IMR-90 (cell line): ENCODE measurements at regions of chr1 and their contacts with region 1.

Region 1: DNA sequence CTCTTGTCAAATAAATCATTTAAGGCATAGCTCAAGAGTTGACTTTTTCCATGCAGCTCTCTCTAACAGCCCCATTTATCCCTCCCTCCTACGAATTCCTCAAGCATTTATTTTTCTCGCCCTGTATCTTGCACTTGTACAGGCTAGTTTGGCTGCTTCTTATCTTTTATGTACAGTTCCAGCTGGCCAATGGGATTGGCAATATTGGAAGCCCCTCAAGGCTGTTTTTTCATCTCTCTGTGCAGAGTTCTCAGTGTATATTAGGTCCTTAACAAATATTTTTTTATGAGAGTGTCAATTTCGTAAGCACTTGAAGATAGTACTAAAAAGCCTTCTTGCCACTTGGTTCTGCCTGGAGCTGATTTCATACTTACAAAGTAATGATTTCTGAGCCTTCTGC is 356.0 kb downstream of the ST6GALNAC3 start:
- DNase-seq: no peak
- ATAC-seq: no peak
- H3K4me3 ChIP-seq: no peak overlapping the region
- H3K27ac ChIP-seq: no peak overlapping the region
- H3K4me1 ChIP-seq: peaks cover 2% of the 10 kb centered on the region; the same call in 1 of the 2 replicates
- H3K27me3 ChIP-seq: no peaks in the 10 kb centered on the region
- CTCF ChIP-seq: no peak
- POLR2A ChIP-seq: no peak
- RAD21 ChIP-seq: no peak

Region 2: DNA sequence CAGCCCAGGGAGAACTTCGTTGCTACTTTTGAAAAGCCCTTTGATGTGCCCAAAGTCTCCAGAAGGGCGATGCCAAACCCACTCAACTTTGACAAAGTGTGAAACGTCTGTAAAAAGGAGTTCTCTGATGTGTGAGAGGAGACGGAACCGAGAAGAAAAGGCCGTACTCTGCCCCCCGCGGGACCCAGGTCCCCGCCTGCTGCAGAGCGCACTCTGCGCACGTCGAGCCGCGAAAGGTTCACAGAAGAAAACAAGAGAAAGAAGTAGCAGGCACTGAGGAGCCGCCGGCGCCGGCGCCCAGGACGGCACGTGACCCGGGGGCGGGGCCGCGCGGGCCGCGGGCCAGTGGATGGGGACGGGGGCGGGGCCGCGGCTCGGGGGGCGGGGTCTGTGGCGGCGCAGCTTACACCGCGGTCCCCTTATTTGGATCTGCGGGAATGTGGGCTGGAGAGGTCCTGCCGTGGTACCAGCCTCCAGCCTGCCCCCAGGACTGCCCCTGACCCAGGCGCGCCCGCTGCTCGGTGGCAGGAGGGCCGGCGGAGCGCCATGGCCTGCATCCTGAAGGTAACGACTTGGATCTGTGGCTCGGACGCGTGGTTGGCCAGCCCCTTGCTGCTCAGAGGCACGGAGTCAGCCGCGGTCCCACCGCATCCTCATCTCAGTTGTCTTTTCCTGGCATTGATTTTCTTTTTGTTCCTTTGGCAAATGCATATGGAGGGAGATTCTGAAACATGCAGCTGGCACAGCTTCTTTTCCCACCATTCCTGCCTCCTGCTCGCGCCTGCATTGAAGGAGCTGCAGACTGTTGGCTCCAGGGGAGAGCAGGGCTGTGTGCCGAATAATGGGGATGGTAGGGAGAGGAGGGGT is 356.0 kb before region 1 on chr1 and contains the start of gene ST6GALNAC3:
- CTCF ChIA-PET with region 1: no interaction called
- POLR2A ChIA-PET with region 1: no interaction called
- dilution Hi-C with region 1: no loop called
- in situ Hi-C with region 1: no loop called
- intact Hi-C with region 1: no loop called
- DNase-seq: peak; percentile 47
- ATAC-seq: peak; percentile 96
- H3K4me3 ChIP-seq: peak within 1 kb of the TSS; percentile 79
- H3K27ac ChIP-seq: peak within 1 kb of the TSS; percentile 13; the same call in 1 of the 2 replicates
- H3K4me1 ChIP-seq: no peaks in the 10 kb centered on the region
- H3K27me3 ChIP-seq: no peaks in the 10 kb centered on the region
- CTCF ChIP-seq: no peak
- POLR2A ChIP-seq: no peak
- RAD21 ChIP-seq: no peak
- total RNA-seq, gene ST6GALNAC3: 0.56 and 1.3 TPM in 2 replicates

Region 3: GRCh38 chr1:76418531-76418930 is 12.0 kb before region 1 on chr1:
- CTCF ChIA-PET with region 1: no interaction called
- POLR2A ChIA-PET with region 1: interaction called, 25 read pairs
- dilution Hi-C with region 1: no loop called
- in situ Hi-C with region 1: no loop called
- intact Hi-C with region 1: no loop called
- DNase-seq: no peak
- ATAC-seq: no peak
- H3K4me3 ChIP-seq: no peak overlapping the region
- H3K27ac ChIP-seq: no peak overlapping the region
- H3K4me1 ChIP-seq: no peaks in the 10 kb centered on the region
- H3K27me3 ChIP-seq: no peaks in the 10 kb centered on the region
- CTCF ChIP-seq: no peak
- POLR2A ChIP-seq: no peak
- RAD21 ChIP-seq: no peak